PC-9 (cell line): ENCODE measurements at regions of chr10 and their contacts with region 1.

Region 1: GRCh38 chr10:110931769-110932381 is 12.5 kb downstream of the SHOC2 start:
- DNase-seq: no peak
- H3K4me3 ChIP-seq: no peak overlapping the region
- H3K27ac ChIP-seq: peak overlapping the region; percentile 61
- H3K4me1 ChIP-seq: peaks cover 37% of the 10 kb centered on the region
- H3K27me3 ChIP-seq: no peaks in the 10 kb centered on the region
- CTCF ChIP-seq: no peak

Region 2: GRCh38 chr10:110273474-110273873 is 658.4 kb before region 1 on chr10:
- CTCF ChIA-PET with region 1: no interaction called
- POLR2A ChIA-PET with region 1: no interaction called
- intact Hi-C with region 1: no loop called
- DNase-seq: peak; percentile 4 to 59
- H3K4me3 ChIP-seq: no peak overlapping the region
- H3K27ac ChIP-seq: no peak overlapping the region
- H3K4me1 ChIP-seq: peaks cover 4% of the 10 kb centered on the region; the same call in 1 of the 2 replicates
- H3K27me3 ChIP-seq: no peaks in the 10 kb centered on the region
- CTCF ChIP-seq: no peak

Region 3: GRCh38 chr10:110724116-110724921 is 207.6 kb before region 1 on chr10:
- CTCF ChIA-PET with region 1: no interaction called
- POLR2A ChIA-PET with region 1: no interaction called
- intact Hi-C with region 1: no loop called
- DNase-seq: no peak
- H3K4me3 ChIP-seq: no peak overlapping the region
- H3K27ac ChIP-seq: no peak overlapping the region
- H3K4me1 ChIP-seq: peaks cover 5% of the 10 kb centered on the region; the same call in 1 of the 2 replicates
- H3K27me3 ChIP-seq: no peaks in the 10 kb centered on the region
- CTCF ChIP-seq: no peak

Region 4: GRCh38 chr10:110803830-110804338 is 128.0 kb before region 1 on chr10:
- CTCF ChIA-PET with region 1: no interaction called
- POLR2A ChIA-PET with region 1: no interaction called
- intact Hi-C with region 1: no loop called
- DNase-seq: no peak
- H3K4me3 ChIP-seq: no peak overlapping the region
- H3K27ac ChIP-seq: no peak overlapping the region
- H3K4me1 ChIP-seq: no peaks in the 10 kb centered on the region
- H3K27me3 ChIP-seq: no peaks in the 10 kb centered on the region
- CTCF ChIP-seq: peak; percentile 46; the same call in 1 of the 2 replicates

Region 5: GRCh38 chr10:110989016-110989415 is 57.1 kb after region 1 on chr10:
- CTCF ChIA-PET with region 1: no interaction called
- POLR2A ChIA-PET with region 1: no interaction called
- intact Hi-C with region 1: loop called (anchors 5 kb)
- DNase-seq: no peak
- H3K4me3 ChIP-seq: no peak overlapping the region
- H3K27ac ChIP-seq: no peak overlapping the region
- H3K4me1 ChIP-seq: no peaks in the 10 kb centered on the region
- H3K27me3 ChIP-seq: no peaks in the 10 kb centered on the region
- CTCF ChIP-seq: no peak